Lower leg skin (tissue), 4 donors: ENCODE measurements at regions of chr3 and their contacts with region 1.

Region 1: DNA sequence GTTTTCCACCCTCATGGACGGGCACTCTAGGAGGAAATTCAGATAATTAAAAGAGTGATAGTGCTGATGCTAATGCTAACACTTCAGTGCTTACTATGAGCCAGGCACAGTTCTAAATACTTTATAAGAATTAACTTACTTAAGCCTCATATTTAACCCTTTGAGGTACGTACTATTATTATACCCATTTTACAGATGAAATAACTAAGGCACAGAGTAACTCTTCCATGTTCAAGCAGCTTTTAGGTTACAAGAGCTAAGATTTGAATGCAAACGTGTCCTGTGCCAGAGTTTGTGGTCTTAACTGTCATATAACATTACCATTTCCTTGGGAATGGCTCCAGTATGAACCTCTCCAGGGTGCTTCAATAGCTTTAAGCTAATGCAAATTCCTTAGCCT is 114.7 kb upstream of the PRR23C start:
- DNase-seq: no peak
- H3K4me3 ChIP-seq: no peak overlapping the region
- CTCF ChIP-seq: no peak
- POLR2A ChIP-seq: no peak

Region 2: GRCh38 chr3:137761197-137762127 is 1397.9 kb before region 1 on chr3:
- intact Hi-C with region 1: no loop called
- DNase-seq: no peak
- H3K4me3 ChIP-seq: no peak overlapping the region
- CTCF ChIP-seq: no peak
- POLR2A ChIP-seq: no peak

Region 3: GRCh38 chr3:138818185-138818860 is 341.0 kb before region 1 on chr3:
- intact Hi-C with region 1: no loop called
- DNase-seq: no peak
- H3K4me3 ChIP-seq: no peak overlapping the region
- CTCF ChIP-seq: no peak
- POLR2A ChIP-seq: no peak

Region 4: DNA sequence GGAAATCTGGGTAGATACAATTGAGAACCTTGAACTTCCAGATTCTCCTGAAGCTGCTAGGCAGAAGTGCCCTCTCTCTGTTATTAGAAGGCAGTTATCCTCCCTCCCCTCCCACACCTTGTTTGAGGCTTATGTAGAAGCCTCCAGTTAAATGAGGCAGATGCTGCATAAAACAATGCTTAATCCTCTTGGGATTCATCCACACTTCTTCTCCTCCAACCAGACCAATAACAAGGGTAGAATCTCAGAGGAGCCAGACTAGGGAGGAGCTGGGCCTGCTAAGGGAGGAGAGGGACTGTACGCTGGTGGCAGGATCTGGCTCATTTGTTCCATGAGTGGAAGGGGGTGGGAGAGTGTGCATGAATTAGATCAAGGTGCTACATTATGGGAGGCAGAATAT is 26.4 kb before region 1 on chr3:
- intact Hi-C with region 1: loop called (anchors 1 kb)
- DNase-seq: no peak
- H3K4me3 ChIP-seq: no peak overlapping the region
- CTCF ChIP-seq: no peak
- POLR2A ChIP-seq: no peak